ENCODE measurements at regions of chr1 and their contacts with region 1.

Region 1: DNA sequence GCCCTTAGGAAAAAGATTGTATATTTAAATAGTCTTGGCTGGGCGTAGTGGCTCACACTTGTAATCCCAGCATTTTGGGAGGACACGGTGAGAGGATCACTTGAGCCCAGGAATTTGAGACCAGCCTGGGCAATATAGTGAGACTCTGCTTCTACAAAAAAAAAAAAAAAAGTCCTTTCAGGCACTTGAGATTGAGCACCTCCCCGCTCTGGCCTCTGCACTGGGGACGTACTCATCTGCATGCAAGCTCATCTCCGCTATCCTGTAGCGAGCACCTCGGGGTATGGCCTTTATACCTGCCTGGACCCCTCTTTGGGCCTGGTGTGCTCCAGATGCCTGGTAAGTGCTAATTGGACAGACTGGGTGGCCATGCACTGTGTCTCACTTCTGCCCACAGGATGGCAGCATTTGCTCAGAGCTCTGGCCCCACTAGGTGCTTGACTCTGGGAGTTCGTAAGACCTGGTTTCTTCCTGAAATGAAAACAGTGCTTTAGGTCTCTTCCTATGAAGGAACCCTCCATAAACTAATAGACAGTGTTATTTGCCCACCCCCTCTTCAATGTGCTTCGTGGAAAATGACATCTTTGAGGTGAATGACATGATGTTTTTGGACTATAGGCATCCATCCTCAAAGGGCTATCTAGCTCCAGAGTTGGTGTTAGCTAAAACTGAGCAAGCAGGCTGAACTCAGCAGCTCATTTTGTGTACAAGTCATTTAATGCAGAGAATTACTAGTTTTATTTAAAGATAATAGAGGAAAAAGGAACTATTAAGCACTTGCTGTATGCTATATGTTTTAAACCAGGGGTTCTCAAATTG is 61.7 kb upstream of the ADAR start:
- DNase-seq: peak; percentile 88
- ATAC-seq: peak; percentile 100
- H3K4me3 Mint-ChIP-seq: no peak overlapping the region
- H3K27ac Mint-ChIP-seq: no peak overlapping the region
- H3K4me1 Mint-ChIP-seq: peaks cover 11% of the 10 kb centered on the region
- H3K27me3 Mint-ChIP-seq: no peaks in the 10 kb centered on the region
- CTCF ChIP-seq: peak; percentile 78

Region 2: DNA sequence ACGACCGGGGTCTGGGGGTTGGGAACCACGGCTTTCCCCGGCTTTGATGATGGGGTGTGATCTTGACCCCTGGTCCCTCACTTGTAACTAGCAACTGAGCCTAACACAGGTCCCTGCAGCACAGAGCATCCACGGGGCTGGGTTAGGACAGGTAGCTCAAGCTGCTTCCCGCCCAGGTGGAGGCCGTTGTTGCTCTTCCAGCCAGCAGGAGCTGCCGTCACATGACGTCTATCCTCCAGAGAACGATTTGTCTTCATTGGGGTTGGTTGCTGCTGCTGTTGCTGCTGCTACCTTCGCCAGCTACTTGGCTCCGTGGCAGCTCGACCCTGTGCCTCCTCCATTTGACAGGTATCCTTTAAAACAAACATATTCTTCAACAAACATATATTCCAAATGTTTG is 12.6 kb after region 1 on chr1:
- CTCF ChIA-PET with region 1: interaction called, 25 read pairs
- POLR2A ChIA-PET with region 1: no interaction called
- intact Hi-C with region 1: no loop called
- DNase-seq: no peak
- ATAC-seq: no peak
- H3K4me3 Mint-ChIP-seq: no peak overlapping the region
- H3K27ac Mint-ChIP-seq: no peak overlapping the region
- H3K4me1 Mint-ChIP-seq: no peaks in the 10 kb centered on the region
- H3K27me3 Mint-ChIP-seq: no peaks in the 10 kb centered on the region
- CTCF ChIP-seq: no peak

Region 3: GRCh38 chr1:154760469-154760933 is 90.8 kb after region 1 on chr1:
- CTCF ChIA-PET with region 1: interaction called, 25 read pairs
- POLR2A ChIA-PET with region 1: no interaction called
- intact Hi-C with region 1: no loop called
- DNase-seq: peak; percentile 85
- ATAC-seq: peak; percentile 61
- H3K4me3 Mint-ChIP-seq: peak overlapping the region; percentile 64
- H3K27ac Mint-ChIP-seq: peak overlapping the region; percentile 96
- H3K4me1 Mint-ChIP-seq: peaks cover 55% of the 10 kb centered on the region
- H3K27me3 Mint-ChIP-seq: no peaks in the 10 kb centered on the region
- CTCF ChIP-seq: peak; percentile 93

Region 4: GRCh38 chr1:154870115-154870571 is 200.5 kb after region 1 on chr1 and contains the start of gene KCNN3:
- CTCF ChIA-PET with region 1: interaction called, 18 read pairs
- POLR2A ChIA-PET with region 1: interaction called, 3 read pairs
- intact Hi-C with region 1: loop called (anchors 5 kb)
- DNase-seq: peak; percentile 85
- ATAC-seq: peak; percentile 99
- H3K4me3 Mint-ChIP-seq: no peak within 1 kb of the TSS
- H3K27ac Mint-ChIP-seq: no peak within 1 kb of the TSS
- H3K4me1 Mint-ChIP-seq: peaks cover 29% of the 10 kb centered on the region
- H3K27me3 Mint-ChIP-seq: peaks cover 30% of the 10 kb centered on the region
- CTCF ChIP-seq: no peak
- total RNA-seq, gene KCNN3: 0.11 TPM in 1 of 2 experiments, not detected in the other

Region 5: DNA sequence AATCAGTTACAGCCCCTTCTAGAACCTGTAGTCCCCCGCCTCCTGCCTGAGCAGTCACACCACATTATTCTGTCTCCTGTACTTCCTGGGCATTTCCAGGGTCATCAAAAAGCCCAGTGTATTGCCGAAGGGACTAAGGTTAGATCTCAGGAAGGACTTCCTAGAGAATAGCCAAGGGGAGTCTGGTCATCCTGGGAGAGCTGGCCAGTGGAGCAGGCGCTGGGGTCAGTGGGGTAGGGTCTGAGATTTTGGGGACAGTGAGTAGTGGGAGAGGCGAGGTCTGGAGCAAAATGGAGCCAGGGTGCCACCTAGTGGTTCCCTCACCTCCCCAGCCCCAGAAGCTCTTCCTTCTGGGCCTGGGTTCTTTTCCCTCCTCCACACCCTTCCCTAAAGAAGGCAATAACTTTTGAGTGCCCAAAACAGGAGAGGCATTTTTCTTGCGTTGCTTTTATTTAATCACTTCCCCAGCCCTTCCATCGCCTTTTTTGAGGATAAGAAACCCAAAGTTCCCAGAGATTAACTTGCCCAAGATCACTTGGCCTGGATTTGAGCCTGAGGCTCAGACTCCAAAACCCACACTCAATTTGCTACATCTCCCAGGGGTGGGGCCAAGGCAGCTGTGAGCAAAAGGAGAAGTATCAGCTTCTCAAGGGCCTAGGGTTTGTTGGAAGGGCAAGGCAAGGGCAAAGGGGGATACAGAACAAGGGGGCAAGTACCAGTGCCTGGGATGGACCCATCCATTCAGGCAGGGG is 274.2 kb after region 1 on chr1:
- CTCF ChIA-PET with region 1: interaction called, 12 read pairs
- POLR2A ChIA-PET with region 1: interaction called, 3 read pairs
- intact Hi-C with region 1: no loop called
- DNase-seq: peak; percentile 59
- ATAC-seq: no peak
- H3K4me3 Mint-ChIP-seq: no peak overlapping the region
- H3K27ac Mint-ChIP-seq: peak overlapping the region; percentile 92
- H3K4me1 Mint-ChIP-seq: peaks cover 55% of the 10 kb centered on the region
- H3K27me3 Mint-ChIP-seq: no peaks in the 10 kb centered on the region
- CTCF ChIP-seq: peak; percentile 92

Measured in activated CD8-positive, alpha-beta T cell treated with anti-CD3 and anti-CD28 coated beads for 36 hours (primary cell).